CD4-positive, alpha-beta T cell (primary cell): ENCODE measurements at regions of chr12 and their contacts with region 1.

Region 1: DNA sequence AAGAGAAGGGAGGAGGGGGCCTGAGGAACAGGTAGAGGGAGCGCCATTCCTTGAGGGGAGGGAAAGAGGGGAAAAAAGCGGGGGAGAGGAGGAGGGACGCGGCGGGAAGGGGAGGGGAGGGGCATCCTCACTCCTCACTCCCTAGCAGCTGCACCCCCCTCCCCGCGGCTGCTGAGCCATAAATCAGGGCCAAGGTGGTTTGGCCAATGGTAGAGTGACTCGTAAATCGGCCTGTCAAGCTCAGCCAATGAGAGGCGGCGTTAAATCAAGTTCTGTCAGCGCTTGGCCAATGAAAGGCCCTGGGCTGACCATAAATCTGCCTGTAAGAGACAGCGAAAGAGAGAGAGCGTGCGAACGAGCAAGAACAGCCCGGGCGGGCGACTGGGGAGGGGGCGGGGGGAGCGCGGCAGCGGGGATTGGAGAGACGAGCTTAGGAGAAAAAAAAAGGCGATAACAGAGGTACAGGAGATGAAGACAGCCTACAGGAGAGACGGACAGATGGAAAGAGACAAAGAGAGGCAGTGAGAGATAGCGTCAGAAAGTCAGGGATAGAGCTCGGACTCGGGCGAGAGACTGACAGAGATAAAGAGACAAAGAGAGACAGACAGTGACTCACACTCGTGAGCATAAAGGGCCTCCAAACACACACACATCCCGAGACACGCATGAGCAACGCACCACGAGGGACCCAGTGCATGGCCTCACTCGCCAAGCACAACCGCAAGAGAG is 5.1 kb downstream of the GPR84 start:
- DNase-seq: peak; percentile 83 to 99 (median 88)
- ATAC-seq: peak; percentile 90
- H3K4me3 ChIP-seq: peak overlapping the region; percentile 78
- H3K4me3 Mint-ChIP-seq: no peak overlapping the region
- H3K27ac ChIP-seq: peak overlapping the region; percentile 85 to 93
- H3K27ac Mint-ChIP-seq: no peak overlapping the region
- H3K4me1 ChIP-seq: peaks cover 47% of the 10 kb centered on the region
- H3K4me1 Mint-ChIP-seq: peaks cover 11% of the 10 kb centered on the region
- H3K27me3 ChIP-seq: no peaks in the 10 kb centered on the region
- H3K27me3 Mint-ChIP-seq: no peaks in the 10 kb centered on the region
- CTCF ChIP-seq: no peak

Region 2: GRCh38 chr12:54220092-54220557 is 139.1 kb before region 1 on chr12:
- CTCF ChIA-PET with region 1: interaction called, 6 read pairs
- POLR2A ChIA-PET with region 1: interaction called, 5 read pairs
- intact Hi-C with region 1: loop called in 1 of 2 experiments (anchors 2 kb)
- DNase-seq: peak; percentile 46 to 80 (median 56)
- ATAC-seq: peak; percentile 57
- H3K4me3 ChIP-seq: no peak overlapping the region
- H3K4me3 Mint-ChIP-seq: no peak overlapping the region
- H3K27ac ChIP-seq: no peak overlapping the region
- H3K27ac Mint-ChIP-seq: no peak overlapping the region
- H3K4me1 ChIP-seq: peaks cover 35% of the 10 kb centered on the region
- H3K4me1 Mint-ChIP-seq: peaks cover 42% of the 10 kb centered on the region
- H3K27me3 ChIP-seq: no peaks in the 10 kb centered on the region
- H3K27me3 Mint-ChIP-seq: peaks cover 8% of the 10 kb centered on the region
- CTCF ChIP-seq: peak; percentile 60

Region 3: GRCh38 chr12:54251667-54252284 is 107.4 kb before region 1 on chr12:
- CTCF ChIA-PET with region 1: interaction called, 11 read pairs
- POLR2A ChIA-PET with region 1: interaction called, 3 read pairs
- intact Hi-C with region 1: loop called in 1 of 2 experiments (anchors 2 kb)
- DNase-seq: peak in 5 of 14 experiments; percentile 3 to 69 (median 58)
- ATAC-seq: peak; percentile 69
- H3K4me3 ChIP-seq: no peak overlapping the region
- H3K4me3 Mint-ChIP-seq: no peak overlapping the region
- H3K27ac ChIP-seq: no peak overlapping the region
- H3K27ac Mint-ChIP-seq: no peak overlapping the region
- H3K4me1 ChIP-seq: no peaks in the 10 kb centered on the region
- H3K4me1 Mint-ChIP-seq: peaks cover 18% of the 10 kb centered on the region
- H3K27me3 ChIP-seq: no peaks in the 10 kb centered on the region
- H3K27me3 Mint-ChIP-seq: no peaks in the 10 kb centered on the region
- CTCF ChIP-seq: peak; percentile 74

Region 4: DNA sequence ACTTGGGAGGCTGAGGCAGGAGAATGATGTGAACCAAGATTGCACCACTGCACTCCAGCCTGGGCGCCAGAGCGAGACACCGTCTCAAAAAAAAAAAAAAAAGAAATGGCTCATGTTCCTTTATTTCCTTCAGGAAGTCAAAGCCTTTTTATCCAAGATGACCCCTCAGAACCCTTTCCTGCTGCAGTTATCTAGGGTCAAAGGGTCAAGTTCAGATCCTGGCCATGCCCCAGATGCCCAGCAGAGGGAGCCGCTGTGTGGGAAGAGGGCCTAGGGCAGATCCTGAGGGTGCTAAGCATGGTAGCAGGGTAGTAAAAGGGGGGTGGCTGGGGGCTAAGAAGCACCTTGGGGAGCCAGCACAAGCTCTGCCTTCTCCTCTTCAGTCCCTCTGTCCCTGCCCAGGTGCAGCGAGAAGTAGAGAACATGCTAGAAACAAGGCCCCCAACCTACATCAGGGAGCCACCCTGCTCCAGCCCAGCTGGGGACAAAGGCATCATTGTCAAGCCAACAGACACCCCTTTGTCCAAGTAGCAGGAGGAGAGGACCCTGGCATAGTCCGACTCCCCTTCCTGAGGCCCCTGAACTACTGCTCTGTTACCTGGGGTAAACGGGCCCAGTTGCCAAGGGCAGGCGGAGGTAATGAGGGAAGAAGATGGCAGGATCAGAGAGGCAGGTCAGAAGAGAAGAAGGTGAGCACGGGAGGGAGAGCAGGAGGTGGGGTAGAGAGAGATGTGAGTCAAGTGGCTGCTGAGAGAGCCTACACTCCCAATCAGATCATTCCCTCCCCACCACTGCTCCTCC is 64.8 kb before region 1 on chr12:
- CTCF ChIA-PET with region 1: interaction called, 6 read pairs
- POLR2A ChIA-PET with region 1: interaction called, 11 read pairs
- intact Hi-C with region 1: loop called (anchors 1 to 2 kb)
- DNase-seq: peak in 13 of 14 experiments; percentile 35 to 74 (median 53)
- ATAC-seq: peak; percentile 72
- H3K4me3 ChIP-seq: no peak overlapping the region
- H3K4me3 Mint-ChIP-seq: no peak overlapping the region
- H3K27ac ChIP-seq: no peak overlapping the region
- H3K27ac Mint-ChIP-seq: no peak overlapping the region
- H3K4me1 ChIP-seq: peaks cover 9% of the 10 kb centered on the region
- H3K4me1 Mint-ChIP-seq: peaks cover 6% of the 10 kb centered on the region
- H3K27me3 ChIP-seq: peaks cover 1 to 3% of the 10 kb centered on the region in 2 experiments
- H3K27me3 Mint-ChIP-seq: peaks cover 10% of the 10 kb centered on the region
- CTCF ChIP-seq: peak; percentile 71

Region 5: DNA sequence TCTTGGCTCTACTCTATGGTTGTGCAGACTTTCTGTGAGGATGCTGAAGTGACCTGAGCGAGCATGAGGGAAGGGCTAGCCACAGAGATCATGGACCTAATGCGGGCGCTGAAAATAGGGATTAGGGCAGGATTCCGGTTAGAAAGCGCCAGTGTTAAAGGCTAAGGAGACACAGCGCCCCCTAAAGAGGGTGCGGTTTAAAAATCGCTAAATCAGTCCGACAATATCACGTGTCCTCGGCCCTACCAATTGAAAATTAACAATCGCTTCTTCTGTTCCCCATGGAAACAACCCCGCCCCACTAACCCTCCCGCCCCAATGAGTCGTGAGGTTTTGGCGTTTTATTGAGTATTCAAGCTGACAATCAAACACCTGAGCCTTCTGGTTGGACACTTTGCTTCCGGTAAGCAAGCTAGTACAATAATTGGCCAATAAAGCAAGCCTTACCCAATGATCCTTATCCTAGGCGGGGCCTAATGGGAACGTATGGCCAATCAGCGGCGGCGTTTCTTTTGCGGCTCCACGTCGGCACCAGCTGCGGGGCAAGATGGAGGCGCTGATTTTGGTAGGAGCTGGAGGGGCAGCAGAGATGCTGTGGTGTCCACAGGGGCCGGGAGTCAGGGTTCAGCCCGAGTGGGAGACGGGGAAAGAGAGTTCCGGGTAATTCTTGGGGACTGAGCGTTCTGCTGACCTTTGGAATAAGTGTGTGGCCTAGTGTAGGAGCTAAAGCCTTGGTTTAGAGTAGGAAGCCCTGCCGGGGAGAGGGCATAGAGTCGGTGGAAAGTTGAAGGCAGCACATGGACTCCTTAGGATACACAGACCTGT is 34.4 kb before region 1 on chr12 and contains the start of gene COPZ1:
- CTCF ChIA-PET with region 1: interaction called, 16 read pairs
- POLR2A ChIA-PET with region 1: interaction called, 25 read pairs
- intact Hi-C with region 1: loop called in 1 of 2 experiments (anchors 1 kb)
- DNase-seq: peak; percentile 84 to 99 (median 90)
- ATAC-seq: peak; percentile 94
- H3K4me3 ChIP-seq: peak within 1 kb of the TSS; percentile 76
- H3K4me3 Mint-ChIP-seq: peak within 1 kb of the TSS; percentile 92
- H3K27ac ChIP-seq: peak within 1 kb of the TSS; percentile 67 to 78
- H3K27ac Mint-ChIP-seq: peak within 1 kb of the TSS; percentile 93
- H3K4me1 ChIP-seq: peaks cover 22% of the 10 kb centered on the region
- H3K4me1 Mint-ChIP-seq: peaks cover 36% of the 10 kb centered on the region
- H3K27me3 ChIP-seq: no peaks in the 10 kb centered on the region
- H3K27me3 Mint-ChIP-seq: no peaks in the 10 kb centered on the region
- CTCF ChIP-seq: peak; percentile 88
- total RNA-seq, gene COPZ1: 31.2 to 33.9 TPM

Region 6: DNA sequence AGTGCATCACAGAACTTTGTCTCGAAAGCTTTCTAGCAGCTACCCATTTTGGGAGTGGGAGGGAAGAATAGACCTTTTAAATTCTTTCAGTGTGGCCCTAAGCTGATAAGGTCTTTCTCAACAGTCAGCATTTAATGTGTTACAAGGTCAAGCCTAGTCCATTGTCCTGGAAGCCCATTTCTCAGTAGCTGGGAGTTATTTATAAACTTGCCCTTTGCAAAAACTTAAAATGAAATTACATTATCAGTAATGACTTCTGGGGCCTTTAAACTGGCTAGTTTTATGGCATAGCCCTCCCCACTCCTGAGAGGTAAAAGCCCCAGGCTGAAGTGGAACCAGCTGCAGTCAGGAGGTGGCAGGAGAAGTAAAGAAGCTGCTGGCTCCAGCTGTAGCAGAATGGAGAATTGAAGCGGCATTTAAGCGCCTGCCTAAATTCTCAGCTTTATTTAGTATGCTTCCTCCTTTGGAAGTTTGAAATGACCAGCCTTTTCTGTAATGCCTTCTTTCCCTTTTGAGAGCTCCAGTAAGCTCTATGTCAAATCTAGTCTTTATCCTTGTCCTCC is 21.8 kb before region 1 on chr12:
- CTCF ChIA-PET with region 1: interaction called, 23 read pairs
- POLR2A ChIA-PET with region 1: interaction called, 11 read pairs
- intact Hi-C with region 1: loop called in 1 of 2 experiments (anchors 2 kb)
- DNase-seq: no peak
- ATAC-seq: no peak
- H3K4me3 ChIP-seq: no peak overlapping the region
- H3K4me3 Mint-ChIP-seq: no peak overlapping the region
- H3K27ac ChIP-seq: no peak overlapping the region
- H3K27ac Mint-ChIP-seq: no peak overlapping the region
- H3K4me1 ChIP-seq: peaks cover 16% of the 10 kb centered on the region
- H3K4me1 Mint-ChIP-seq: peaks cover 30% of the 10 kb centered on the region
- H3K27me3 ChIP-seq: no peaks in the 10 kb centered on the region
- H3K27me3 Mint-ChIP-seq: no peaks in the 10 kb centered on the region
- CTCF ChIP-seq: no peak

Region 7: DNA sequence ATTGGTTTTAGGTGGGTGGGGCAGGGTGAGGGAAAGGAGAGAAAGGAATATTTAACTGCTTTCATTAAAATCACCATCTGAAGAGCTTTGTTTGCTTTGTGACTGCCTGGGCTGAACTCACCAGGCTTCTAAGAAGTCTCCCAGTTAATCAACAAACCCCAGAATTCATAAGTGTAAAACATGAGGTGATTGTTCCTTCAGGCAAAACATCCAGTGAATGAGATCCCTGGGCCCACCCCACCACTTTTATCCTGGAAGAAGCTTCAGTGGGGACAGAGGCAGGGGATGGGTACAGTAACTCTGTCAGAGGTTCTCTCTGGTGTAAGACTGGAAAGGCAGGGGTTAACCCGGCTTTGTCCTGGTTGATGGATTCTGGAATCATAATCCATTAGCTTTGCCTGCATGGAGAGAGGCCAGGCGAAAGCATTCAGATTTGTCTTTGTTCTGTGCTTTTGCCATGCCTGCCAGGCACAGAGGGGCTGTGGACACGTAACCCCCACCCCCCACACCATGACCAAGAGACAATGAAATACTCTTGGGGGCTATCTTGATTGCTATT is 206.9 kb after region 1 on chr12:
- CTCF ChIA-PET with region 1: no interaction called
- POLR2A ChIA-PET with region 1: no interaction called
- intact Hi-C with region 1: no loop called
- DNase-seq: no peak
- ATAC-seq: no peak
- H3K4me3 ChIP-seq: no peak overlapping the region
- H3K4me3 Mint-ChIP-seq: no peak overlapping the region
- H3K27ac ChIP-seq: no peak overlapping the region
- H3K27ac Mint-ChIP-seq: no peak overlapping the region
- H3K4me1 ChIP-seq: peaks cover 5% of the 10 kb centered on the region
- H3K4me1 Mint-ChIP-seq: peaks cover 22% of the 10 kb centered on the region
- H3K27me3 ChIP-seq: no peaks in the 10 kb centered on the region
- H3K27me3 Mint-ChIP-seq: no peaks in the 10 kb centered on the region
- CTCF ChIP-seq: no peak